ENCODE measurements at regions of chr12 and their contacts with region 1.

Region 1: GRCh38 chr12:11758510-11759493 is 109.3 kb downstream of the ETV6 start:
- DNase-seq: no peak
- ATAC-seq: peak; percentile 71

Region 2: DNA sequence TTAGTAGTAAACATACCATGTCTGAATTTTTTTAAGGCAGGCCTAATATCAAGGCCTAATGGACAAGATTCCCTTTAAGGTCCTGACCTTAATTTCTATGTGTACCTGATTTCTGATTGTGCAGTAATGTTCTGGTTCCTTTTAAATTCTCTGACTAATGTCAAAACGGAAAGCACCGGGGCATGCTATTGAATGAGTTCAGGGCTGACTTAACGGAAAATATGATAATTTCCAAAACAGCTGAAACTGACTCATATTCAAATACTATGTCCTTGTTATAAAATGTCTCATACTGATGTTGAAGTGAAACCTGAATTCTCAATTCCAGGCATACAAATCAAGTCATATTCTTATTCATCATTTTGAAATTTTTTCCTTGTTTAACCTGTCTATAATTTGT is 673.4 kb before region 1 on chr12:
- intact Hi-C with region 1: no loop called
- DNase-seq: no peak
- ATAC-seq: no peak

Region 3: DNA sequence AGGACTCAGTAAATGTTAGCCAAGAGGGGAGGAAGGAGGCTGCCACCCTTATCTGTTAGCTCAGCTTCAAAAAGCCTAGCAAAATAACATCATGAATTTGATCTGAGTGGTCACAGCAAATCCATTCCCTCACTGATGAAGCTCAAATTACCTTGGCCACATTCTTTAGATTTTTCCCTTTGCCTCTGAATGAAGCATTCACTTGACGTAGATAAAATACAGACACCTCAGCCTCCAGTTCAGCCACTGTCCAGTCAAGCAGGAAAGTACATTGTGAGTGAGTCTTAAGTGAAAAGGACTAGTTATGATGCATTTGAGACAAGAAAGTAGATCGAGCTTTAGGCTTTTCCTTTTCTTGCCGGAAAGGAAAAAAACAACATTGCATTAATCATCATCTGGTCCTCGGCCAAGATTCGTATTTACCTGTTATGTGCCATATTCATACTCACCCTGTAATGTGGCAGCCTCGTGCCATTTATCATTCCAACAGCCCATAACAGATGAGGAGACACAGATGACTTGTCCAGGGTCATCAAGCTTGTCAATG is 37.2 kb after region 1 on chr12:
- intact Hi-C with region 1: loop called (anchors 2 kb)
- DNase-seq: no peak
- ATAC-seq: no peak

Region 4: GRCh38 chr12:11862798-11863197 is 104.0 kb after region 1 on chr12:
- intact Hi-C with region 1: loop called (anchors 5 kb)
- DNase-seq: no peak
- ATAC-seq: peak; percentile 70

Region 5: DNA sequence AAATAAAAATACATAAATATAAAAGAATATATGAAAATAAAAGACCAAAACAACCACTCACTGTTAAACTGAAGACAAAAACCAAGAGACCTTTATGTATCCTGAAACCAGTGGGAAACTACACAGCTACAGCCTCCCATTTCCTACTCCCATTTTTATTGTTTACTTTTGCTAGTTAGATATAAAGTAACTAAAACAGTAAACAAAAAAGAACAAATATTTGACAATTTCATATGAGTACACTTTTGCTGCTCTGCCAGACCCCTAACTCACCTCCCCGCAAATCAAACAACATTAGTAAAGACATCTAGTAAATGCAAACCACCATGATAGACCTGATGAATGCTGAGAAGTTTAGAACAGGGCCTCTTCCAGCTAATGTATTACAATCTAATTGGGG is 409.0 kb after region 1 on chr12:
- intact Hi-C with region 1: no loop called
- DNase-seq: no peak
- ATAC-seq: no peak